ENCODE measurements at regions of chr11 and their contacts with region 1.

Region 1: DNA sequence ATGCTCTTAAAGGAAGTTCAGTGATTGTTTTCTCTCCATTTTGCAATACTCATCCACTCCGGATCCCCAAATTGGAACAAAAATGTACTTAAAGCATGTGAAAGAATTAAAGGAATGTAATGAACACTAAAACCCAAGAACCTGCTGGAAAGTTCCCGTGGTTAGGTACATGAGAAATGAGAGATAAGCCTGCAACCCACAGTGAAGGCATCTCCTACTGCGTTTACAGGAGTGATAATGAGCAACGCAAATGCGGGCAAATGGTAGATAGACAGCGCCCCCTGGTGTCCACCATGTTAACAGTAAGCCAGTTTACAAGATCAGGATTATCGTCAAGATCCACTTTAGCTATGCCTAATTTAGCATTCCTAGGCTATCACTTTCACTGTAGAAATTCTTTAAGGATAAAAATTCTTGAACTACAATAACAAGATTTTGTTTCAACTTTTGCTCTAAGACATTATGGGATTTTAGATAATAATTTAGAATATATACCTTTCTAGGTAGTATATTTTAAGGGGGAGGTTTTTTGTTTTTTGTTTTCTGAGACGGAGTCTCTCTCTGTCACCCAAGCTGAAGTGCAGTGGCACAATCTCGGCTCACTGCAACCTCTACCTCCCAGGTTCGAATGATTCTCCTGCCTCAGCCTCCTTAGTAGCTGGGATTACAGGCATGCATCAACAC is 29.9 kb downstream of the ALG9 start:
- DNase-seq: peak; percentile 77
- ATAC-seq: peak; percentile 81
- H3K4me3 ChIP-seq: no peak overlapping the region
- H3K27ac ChIP-seq: peak overlapping the region; percentile 70
- H3K4me1 ChIP-seq: peaks cover 33% of the 10 kb centered on the region
- H3K27me3 ChIP-seq: no peaks in the 10 kb centered on the region
- CTCF ChIP-seq: peak; percentile 95
- EP300 ChIP-seq: no peak
- POLR2A ChIP-seq: no peak
- RAD21 ChIP-seq: peak; percentile 90

Region 2: GRCh38 chr11:111446404-111447111 is 395.0 kb before region 1 on chr11:
- CTCF ChIA-PET with region 1: no interaction called
- POLR2A ChIA-PET with region 1: no interaction called
- in situ Hi-C with region 1: loop called (anchors 10 kb)
- intact Hi-C with region 1: loop called (anchors 5 kb)
- DNase-seq: peak; percentile 82
- ATAC-seq: peak; percentile 95
- H3K4me3 ChIP-seq: no peak overlapping the region
- H3K27ac ChIP-seq: no peak overlapping the region
- H3K4me1 ChIP-seq: peaks cover 44% of the 10 kb centered on the region
- H3K27me3 ChIP-seq: peaks cover 3 to 5% of the 10 kb centered on the region in 2 experiments; a peak in 3 of 5 replicates
- CTCF ChIP-seq: peak; percentile 98
- EP300 ChIP-seq: no peak
- POLR2A ChIP-seq: no peak
- RAD21 ChIP-seq: peak; percentile 91

Region 3: GRCh38 chr11:111565114-111565720 is 276.3 kb before region 1 on chr11:
- CTCF ChIA-PET with region 1: interaction called, 16 read pairs
- POLR2A ChIA-PET with region 1: no interaction called
- in situ Hi-C with region 1: no loop called
- intact Hi-C with region 1: loop called (anchors 1 kb)
- DNase-seq: peak; percentile 39
- ATAC-seq: 0 out of 3 replicates have a peak, but pooled peaks have one; percentile 14
- H3K4me3 ChIP-seq: no peak overlapping the region
- H3K27ac ChIP-seq: no peak overlapping the region
- H3K4me1 ChIP-seq: peaks cover 62% of the 10 kb centered on the region
- H3K27me3 ChIP-seq: no peaks in the 10 kb centered on the region
- CTCF ChIP-seq: peak; percentile 75
- EP300 ChIP-seq: no peak
- POLR2A ChIP-seq: no peak
- RAD21 ChIP-seq: peak; percentile 49; the same call in 1 of the 2 replicates

Region 4: DNA sequence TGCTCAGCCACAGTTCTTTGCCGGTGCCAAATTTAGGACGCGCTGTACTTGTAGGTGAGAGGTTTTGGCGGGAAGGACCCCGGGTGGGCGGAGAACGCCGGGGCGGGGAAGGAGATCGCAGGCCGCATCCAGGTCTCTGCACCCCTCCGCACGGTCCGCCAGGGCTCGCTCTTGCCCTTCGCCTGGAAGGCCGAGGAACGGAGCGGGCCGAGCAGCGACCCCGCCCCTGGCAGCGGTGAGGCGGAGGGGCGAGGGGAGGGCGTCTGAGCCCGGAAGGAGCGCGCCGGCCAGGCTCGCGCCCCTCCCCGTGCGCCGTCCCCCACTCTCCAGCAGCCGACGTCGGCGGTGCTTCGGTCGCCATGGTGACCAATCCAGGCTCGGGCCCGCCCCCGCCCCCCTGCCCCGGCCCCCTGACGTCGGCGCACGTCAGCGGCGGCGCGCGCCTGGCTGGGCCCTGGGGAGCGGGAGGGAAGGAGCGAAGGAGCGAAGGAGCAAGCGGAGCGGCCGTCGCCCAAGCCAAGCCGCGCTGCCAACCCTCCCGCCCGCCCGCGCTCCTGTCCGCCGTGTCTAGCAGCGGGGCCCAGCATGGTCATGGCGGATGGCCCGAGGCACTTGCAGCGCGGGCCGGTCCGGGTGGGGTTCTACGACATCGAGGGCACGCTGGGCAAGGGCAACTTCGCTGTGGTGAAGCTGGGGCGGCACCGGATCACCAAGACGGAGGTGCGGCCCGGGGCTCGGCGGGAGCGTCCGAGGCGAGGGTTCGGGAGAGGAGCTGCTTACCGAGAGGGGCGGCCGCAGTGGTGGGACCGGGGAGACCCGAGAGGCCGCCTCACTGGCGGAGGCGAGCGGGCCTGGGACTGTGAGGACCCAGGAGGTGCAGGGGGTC is 239.3 kb before region 1 on chr11 and contains the start of gene SIK2:
- CTCF ChIA-PET with region 1: interaction called, 47 read pairs
- POLR2A ChIA-PET with region 1: no interaction called
- in situ Hi-C with region 1: loop called (anchors 5 kb)
- intact Hi-C with region 1: loop called (anchors 1 kb)
- DNase-seq: peak; percentile 89
- ATAC-seq: peak; percentile 91
- H3K4me3 ChIP-seq: peak within 1 kb of the TSS; percentile 84 to 95 (median 90)
- H3K27ac ChIP-seq: peak within 1 kb of the TSS; percentile 87
- H3K4me1 ChIP-seq: peaks cover 60% of the 10 kb centered on the region
- H3K27me3 ChIP-seq: no peaks in the 10 kb centered on the region; a peak in 1 of 5 replicates
- CTCF ChIP-seq: peak; percentile 99
- EP300 ChIP-seq: peak in 1 of 2 experiments; percentile 28; a peak in 1 of 4 replicates
- POLR2A ChIP-seq: peak; percentile 38 to 44; a peak in 2 of 4 replicates
- RAD21 ChIP-seq: peak; percentile 100
- total RNA-seq, gene SIK2: 8.1 and 11.0 TPM in 2 replicates

Region 5: GRCh38 chr11:111777094-111778046 is 64.1 kb before region 1 on chr11:
- CTCF ChIA-PET with region 1: interaction called, 17 read pairs
- POLR2A ChIA-PET with region 1: interaction called, 8 read pairs
- in situ Hi-C with region 1: no loop called
- intact Hi-C with region 1: loop called (anchors 1 kb)
- DNase-seq: peak; percentile 82
- ATAC-seq: peak; percentile 85
- H3K4me3 ChIP-seq: peak overlapping the region; percentile 17 to 62 (median 44); a peak in 4 of 6 replicates
- H3K27ac ChIP-seq: peak overlapping the region; percentile 85
- H3K4me1 ChIP-seq: peaks cover 63% of the 10 kb centered on the region
- H3K27me3 ChIP-seq: no peaks in the 10 kb centered on the region
- CTCF ChIP-seq: peak; percentile 86
- EP300 ChIP-seq: peak in 1 of 2 experiments; percentile 47; a peak in 2 of 4 replicates
- POLR2A ChIP-seq: 0 out of 4 replicates have a peak, but pooled peaks of 1 of the 2 experiments have one; percentile 39
- RAD21 ChIP-seq: peak; percentile 69